Activated T-helper 1 cell treated with anti-CD3 and anti-CD28 coated beads, Interleukin-12 subunit alpha, Interleukin-12 subunit beta, Interleukin-2, Interleukin-4 antibody, amounts not matched to agents 30 ng/mL and 10 ng/mL and 1 ng/mL, durations not matched to agents 14 hours and 24 hours and 36 hours (primary cell): ENCODE measurements at regions of chr10 and their contacts with region 1.

Region 1: GRCh38 chr10:63707254-63707910 is 186.2 kb downstream of the REEP3 start:
- DNase-seq: peak; percentile 19
- H3K4me3 Mint-ChIP-seq: peak overlapping the region; percentile 3
- H3K27ac Mint-ChIP-seq: peak overlapping the region; percentile 61
- H3K4me1 Mint-ChIP-seq: peaks cover 22% of the 10 kb centered on the region
- H3K27me3 Mint-ChIP-seq: no peaks in the 10 kb centered on the region

Region 2: GRCh38 chr10:62528441-62528840 is 1178.9 kb before region 1 on chr10:
- intact Hi-C with region 1: loop called (anchors 5 kb)
- DNase-seq: no peak
- H3K4me3 Mint-ChIP-seq: no peak overlapping the region
- H3K27ac Mint-ChIP-seq: peak overlapping the region; percentile 1
- H3K4me1 Mint-ChIP-seq: peaks cover 33% of the 10 kb centered on the region
- H3K27me3 Mint-ChIP-seq: peaks cover 9% of the 10 kb centered on the region

Region 3: DNA sequence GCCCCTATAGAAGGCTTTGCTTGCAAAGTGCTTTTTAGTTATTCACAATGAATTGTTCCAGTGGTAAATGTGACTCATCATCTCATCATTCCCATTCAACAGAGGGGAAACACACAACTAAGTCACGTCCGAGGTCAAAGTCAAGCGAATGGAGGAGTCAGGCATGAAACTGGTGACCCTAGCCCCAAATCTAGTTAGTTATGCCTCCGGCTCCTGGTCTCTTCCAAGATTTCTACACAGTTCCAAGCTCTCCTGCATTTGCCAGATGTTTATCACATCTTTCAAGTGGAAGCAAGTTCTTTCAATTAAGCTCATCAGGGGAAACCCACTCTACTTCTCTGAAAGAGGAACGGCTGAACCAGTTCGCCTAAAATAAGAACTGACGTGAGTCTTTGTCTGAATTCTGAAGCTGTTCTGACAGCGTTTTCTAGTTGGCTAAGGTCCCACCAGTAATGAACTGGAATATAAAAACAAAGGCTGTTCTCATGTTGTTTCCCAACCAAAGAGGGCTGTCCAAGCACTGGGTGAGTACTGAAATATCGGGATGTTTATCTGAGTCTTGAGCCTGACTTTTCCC is 715.1 kb before region 1 on chr10:
- intact Hi-C with region 1: loop called (anchors 1 kb)
- DNase-seq: no peak
- H3K4me3 Mint-ChIP-seq: peak overlapping the region; percentile 58
- H3K27ac Mint-ChIP-seq: peak overlapping the region; percentile 94
- H3K4me1 Mint-ChIP-seq: peaks cover 52% of the 10 kb centered on the region
- H3K27me3 Mint-ChIP-seq: peaks cover 4% of the 10 kb centered on the region

Region 4: DNA sequence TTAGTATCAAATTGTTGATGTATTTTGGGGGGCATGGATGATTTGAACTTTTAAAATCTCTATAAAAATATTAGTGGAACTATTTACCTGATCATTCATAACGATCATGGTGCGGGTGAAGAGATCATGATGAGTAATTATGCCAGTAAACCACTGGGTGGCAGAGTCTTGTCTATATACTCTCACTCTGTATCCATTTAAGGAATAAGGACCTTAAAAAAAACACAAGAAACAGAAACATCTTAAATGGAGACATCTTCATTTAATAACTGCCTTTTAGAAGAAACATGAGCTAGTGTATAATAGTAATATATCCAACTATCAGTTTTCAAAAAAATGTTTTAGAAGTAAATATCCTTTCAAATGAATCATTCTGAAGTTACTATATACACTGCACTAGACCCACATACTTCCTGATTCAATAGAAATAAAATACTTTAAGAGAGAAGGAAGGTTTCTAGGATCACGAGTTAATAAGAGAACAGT is 490.2 kb before region 1 on chr10:
- intact Hi-C with region 1: loop called (anchors 2 kb)
- DNase-seq: no peak
- H3K4me3 Mint-ChIP-seq: no peak overlapping the region
- H3K27ac Mint-ChIP-seq: peak overlapping the region; percentile 13
- H3K4me1 Mint-ChIP-seq: peaks cover 51% of the 10 kb centered on the region
- H3K27me3 Mint-ChIP-seq: no peaks in the 10 kb centered on the region

Region 5: GRCh38 chr10:63521416-63522276 is 185.7 kb before region 1 on chr10:
- intact Hi-C with region 1: loop called (anchors 1 kb)
- DNase-seq: peak; percentile 49
- H3K4me3 Mint-ChIP-seq: peak overlapping the region; percentile 83
- H3K27ac Mint-ChIP-seq: peak overlapping the region; percentile 88
- H3K4me1 Mint-ChIP-seq: peaks cover 63% of the 10 kb centered on the region
- H3K27me3 Mint-ChIP-seq: no peaks in the 10 kb centered on the region

Region 6: GRCh38 chr10:63562857-63563256 is 144.5 kb before region 1 on chr10:
- intact Hi-C with region 1: no loop called
- DNase-seq: no peak
- H3K4me3 Mint-ChIP-seq: no peak overlapping the region
- H3K27ac Mint-ChIP-seq: no peak overlapping the region
- H3K4me1 Mint-ChIP-seq: peaks cover 6% of the 10 kb centered on the region
- H3K27me3 Mint-ChIP-seq: no peaks in the 10 kb centered on the region

Region 7: DNA sequence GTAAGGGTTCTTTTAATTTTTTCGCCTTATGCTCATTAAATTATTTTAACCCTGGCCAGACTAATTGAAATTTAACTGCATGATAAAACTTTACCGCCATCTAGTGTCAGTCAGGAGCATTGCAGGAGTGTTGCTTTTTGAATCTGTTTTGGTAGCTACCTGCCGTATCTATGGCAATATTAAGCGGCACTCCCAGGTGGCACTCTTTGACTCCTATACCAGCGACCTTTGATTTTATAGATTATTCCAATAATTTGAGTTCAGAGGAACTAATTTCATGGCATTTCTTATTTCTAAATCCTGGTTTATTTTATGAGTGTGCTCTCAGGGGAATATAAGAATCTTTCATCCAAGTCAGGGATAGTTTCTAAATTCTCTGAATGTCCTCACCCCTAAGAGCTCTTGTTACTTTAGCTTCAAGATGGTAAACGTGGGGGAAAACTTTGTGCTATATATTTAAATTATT is 12.7 kb after region 1 on chr10:
- intact Hi-C with region 1: loop called (anchors 1 kb)
- DNase-seq: peak; percentile 17
- H3K4me3 Mint-ChIP-seq: peak overlapping the region; percentile 51
- H3K27ac Mint-ChIP-seq: no peak overlapping the region
- H3K4me1 Mint-ChIP-seq: peaks cover 34% of the 10 kb centered on the region
- H3K27me3 Mint-ChIP-seq: peaks cover 4% of the 10 kb centered on the region

Region 8: DNA sequence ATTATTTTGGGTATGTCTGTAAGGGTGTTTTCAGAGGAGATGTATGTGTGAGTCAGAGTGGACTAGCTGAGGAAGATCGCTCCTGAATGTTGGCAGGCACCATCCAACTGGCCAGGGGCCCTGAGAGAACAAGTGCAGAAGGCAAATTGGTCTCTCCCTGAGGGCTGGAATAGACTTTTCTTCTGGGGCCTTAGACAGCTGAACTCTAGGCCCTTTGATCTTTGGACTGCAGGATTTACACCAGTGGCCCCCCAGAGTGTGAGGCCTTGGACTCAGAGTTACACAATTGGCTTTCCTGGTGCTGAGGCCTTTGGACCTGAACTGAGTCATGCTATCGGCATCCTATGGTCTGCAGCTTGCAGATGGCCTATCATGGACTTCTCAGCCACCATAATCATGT is 31.0 kb after region 1 on chr10:
- intact Hi-C with region 1: no loop called
- DNase-seq: no peak
- H3K4me3 Mint-ChIP-seq: no peak overlapping the region
- H3K27ac Mint-ChIP-seq: no peak overlapping the region
- H3K4me1 Mint-ChIP-seq: no peaks in the 10 kb centered on the region
- H3K27me3 Mint-ChIP-seq: peaks cover 1% of the 10 kb centered on the region